Pancreas (tissue), 10 donors: ENCODE measurements at regions of chr3 and their contacts with region 1.

Region 1: DNA sequence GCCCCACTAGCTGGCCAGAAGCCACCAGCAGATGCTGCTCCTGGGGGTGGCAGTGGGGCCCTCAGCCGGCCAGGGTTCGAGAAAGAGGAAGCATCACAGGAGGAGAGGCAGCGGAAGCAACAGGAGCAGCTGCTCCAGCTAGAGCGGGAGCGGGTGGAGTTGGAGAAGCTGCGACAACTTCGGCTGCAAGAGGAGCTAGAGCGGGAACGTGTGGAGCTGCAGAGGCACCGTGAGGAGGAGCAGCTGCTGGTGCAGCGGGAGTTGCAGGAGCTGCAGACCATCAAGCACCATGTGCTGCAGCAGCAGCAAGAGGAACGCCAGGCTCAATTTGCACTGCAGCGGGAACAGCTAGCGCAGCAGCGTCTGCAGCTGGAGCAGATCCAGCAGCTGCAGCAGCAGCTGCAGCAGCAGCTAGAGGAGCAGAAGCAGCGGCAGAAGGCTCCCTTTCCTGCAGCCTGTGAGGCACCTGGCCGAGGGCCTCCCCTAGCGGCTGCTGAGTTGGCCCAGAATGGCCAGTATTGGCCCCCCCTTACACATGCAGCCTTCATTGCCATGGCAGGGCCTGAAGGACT is 17.5 kb upstream of the APEH start:
- DNase-seq: no peak
- ATAC-seq: no peak
- H3K4me3 ChIP-seq: no peak overlapping the region
- H3K27ac ChIP-seq: no peak overlapping the region
- H3K4me1 ChIP-seq: no peaks in the 10 kb centered on the region
- H3K27me3 ChIP-seq: no peaks in the 10 kb centered on the region
- CTCF ChIP-seq: no peak

Region 2: DNA sequence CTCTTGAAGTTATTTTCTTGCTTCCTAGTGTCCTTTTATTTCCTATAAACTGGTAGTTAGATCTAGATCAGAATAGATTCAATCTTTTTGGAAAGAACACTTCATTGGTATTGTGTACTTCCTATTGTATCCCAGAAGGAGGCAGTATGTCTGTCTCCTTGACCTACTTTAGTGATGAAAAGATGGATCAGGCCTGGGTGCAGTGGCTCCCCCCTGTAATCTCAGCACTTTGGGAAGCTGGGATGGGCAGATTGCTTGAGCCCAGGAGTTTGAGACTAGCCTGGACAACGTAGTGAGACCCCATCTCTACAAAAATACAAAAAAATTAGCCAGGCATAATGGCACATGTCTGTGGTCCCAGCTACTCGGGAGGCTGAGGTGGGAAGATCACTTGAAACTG is 90.3 kb before region 1 on chr3:
- intact Hi-C with region 1: loop called in 1 of 3 experiments (anchors 10 kb)
- DNase-seq: no peak
- ATAC-seq: no peak
- H3K4me3 ChIP-seq: no peak overlapping the region
- H3K27ac ChIP-seq: no peak overlapping the region
- H3K4me1 ChIP-seq: no peaks in the 10 kb centered on the region
- H3K27me3 ChIP-seq: no peaks in the 10 kb centered on the region
- CTCF ChIP-seq: no peak